ENCODE measurements at regions of chr2 and their contacts with region 1.

Region 1: GRCh38 chr2:222903234-222904220 is 42.7 kb downstream of the ACSL3 start:
- DNase-seq: peak in 1 of 2 donors; percentile 24
- ATAC-seq: peak in 7 of 8 donors; percentile 64 to 74 (median 68)
- H3K4me3 ChIP-seq: no peak overlapping the region
- H3K27ac ChIP-seq: peak overlapping the region in 1 of 10 donors; percentile 39
- H3K4me1 ChIP-seq: peaks cover 0 to 74% (median 40%) of the 10 kb centered on the region in 9 donors
- H3K27me3 ChIP-seq: no peaks in the 10 kb centered on the region
- CTCF ChIP-seq: peak; percentile 55 to 83 (median 75)

Region 2: DNA sequence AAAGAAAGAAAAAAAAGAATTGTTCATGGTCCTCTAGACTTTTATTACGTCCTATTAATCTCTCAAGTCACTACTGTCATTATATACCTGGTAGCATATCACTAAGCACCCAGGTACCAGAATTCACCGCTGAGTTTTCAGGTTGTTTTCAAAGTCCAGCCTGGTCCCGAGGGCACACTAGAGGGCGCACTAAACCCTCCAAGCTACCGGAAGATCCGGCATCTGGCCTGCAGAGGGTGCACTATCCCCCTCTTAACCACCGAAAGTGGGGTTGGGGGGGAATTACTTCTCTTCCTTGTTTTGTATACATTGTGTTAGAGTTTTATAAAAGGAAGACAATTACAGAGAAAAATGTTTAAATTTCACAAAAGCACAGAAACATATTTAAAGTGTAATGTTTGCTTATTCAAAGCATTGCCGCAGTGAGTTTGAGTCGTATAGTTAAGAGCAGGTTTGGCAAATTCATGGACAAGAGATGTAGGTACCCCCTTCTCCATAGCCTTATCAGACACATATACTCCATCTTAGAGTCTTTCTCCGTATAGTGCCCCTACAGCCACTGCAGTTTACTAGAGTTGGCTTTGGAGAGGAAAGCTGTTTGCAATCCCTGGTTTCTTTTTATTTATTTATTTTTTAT is 212.8 kb before region 1 on chr2:
- intact Hi-C with region 1: loop called in 4 of 10 experiments (anchors 5 kb)
- DNase-seq: peak; percentile 67 to 71
- ATAC-seq: peak; percentile 71 to 89 (median 84)
- H3K4me3 ChIP-seq: no peak overlapping the region
- H3K27ac ChIP-seq: no peak overlapping the region
- H3K4me1 ChIP-seq: peaks cover 0 to 13% (median 0%) of the 10 kb centered on the region in 9 donors
- H3K27me3 ChIP-seq: no peaks in the 10 kb centered on the region
- CTCF ChIP-seq: peak; percentile 80 to 99 (median 97)

Region 3: GRCh38 chr2:222714361-222715241 is 188.9 kb before region 1 on chr2:
- intact Hi-C with region 1: loop called in 5 of 10 experiments (anchors 2 to 5 kb)
- DNase-seq: peak in 1 of 2 donors; percentile 63
- ATAC-seq: peak; percentile 85 to 95 (median 90)
- H3K4me3 ChIP-seq: no peak overlapping the region
- H3K27ac ChIP-seq: peak overlapping the region; percentile 15 to 88 (median 66)
- H3K4me1 ChIP-seq: peaks cover 7 to 27% (median 18%) of the 10 kb centered on the region in 9 donors
- H3K27me3 ChIP-seq: no peaks in the 10 kb centered on the region
- CTCF ChIP-seq: no peak

Region 4: DNA sequence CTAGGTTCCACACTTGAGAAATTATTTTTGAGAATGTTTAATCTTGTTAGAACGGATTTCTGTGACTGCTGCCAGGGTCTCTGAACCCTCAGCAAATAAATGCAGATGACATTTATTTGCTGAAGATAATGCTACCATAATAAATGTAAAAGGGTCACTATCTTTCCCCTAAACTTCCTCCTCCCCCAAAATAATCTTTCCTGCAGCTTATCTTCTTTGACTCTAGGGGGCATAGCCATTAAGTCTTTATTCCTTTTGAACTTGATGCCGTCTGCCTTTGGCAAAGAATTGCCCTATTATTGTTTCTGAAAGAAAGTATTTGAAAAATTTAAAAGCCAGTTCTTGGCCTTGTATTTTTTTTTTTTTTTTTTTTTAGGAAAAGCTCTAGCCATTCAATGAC is 106.3 kb before region 1 on chr2:
- intact Hi-C with region 1: loop called in 8 of 10 experiments (anchors 2 to 10 kb)
- DNase-seq: no peak
- ATAC-seq: peak in 4 of 8 donors; percentile 22 to 51 (median 39)
- H3K4me3 ChIP-seq: no peak overlapping the region
- H3K27ac ChIP-seq: peak overlapping the region in 4 of 10 donors; percentile 37 to 60 (median 49)
- H3K4me1 ChIP-seq: peaks cover 6 to 48% (median 33%) of the 10 kb centered on the region in 9 donors
- H3K27me3 ChIP-seq: no peaks in the 10 kb centered on the region
- CTCF ChIP-seq: peak in 7 of 9 donors; percentile 40 to 63 (median 48)

Region 5: DNA sequence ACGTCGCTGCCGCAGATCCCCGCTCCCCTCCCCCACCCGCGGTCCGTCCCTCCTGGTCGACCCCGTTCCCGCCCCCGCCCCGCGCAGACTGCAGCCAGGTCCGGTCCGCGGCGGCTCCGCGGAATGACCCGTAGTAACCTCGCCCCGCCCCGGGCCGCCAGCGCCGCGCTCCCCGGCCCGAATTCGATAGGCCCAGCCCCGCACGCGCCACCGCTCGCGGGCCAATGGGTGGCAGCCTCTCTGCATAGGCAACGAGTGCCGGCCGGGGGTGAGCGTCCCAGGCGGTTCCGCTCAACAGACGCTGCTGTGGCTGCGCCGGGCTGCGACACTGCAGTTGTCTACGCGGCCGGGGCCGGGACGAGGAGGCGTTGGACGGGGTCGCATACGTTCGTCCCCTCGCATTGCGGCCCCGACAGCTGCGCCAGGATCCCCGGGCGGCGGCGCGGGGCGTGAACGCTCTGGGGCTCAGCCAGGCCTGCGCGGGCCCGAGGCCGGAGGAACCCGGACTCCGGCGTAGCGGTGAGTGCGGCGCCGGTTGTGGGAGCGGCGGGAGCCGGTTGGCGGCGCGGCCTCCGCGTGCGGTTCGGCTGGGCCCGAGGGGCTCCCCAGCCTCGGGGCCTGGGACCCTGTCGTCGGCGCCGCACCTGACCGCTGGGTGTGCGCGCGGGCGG is 42.7 kb before region 1 on chr2 and contains the start of gene ACSL3:
- intact Hi-C with region 1: loop called in 5 of 10 experiments (anchors 2 to 5 kb)
- DNase-seq: peak; percentile 97 to 98
- ATAC-seq: peak; percentile 96 to 99 (median 97)
- H3K4me3 ChIP-seq: peak within 1 kb of the TSS; percentile 76 to 100 (median 90)
- H3K27ac ChIP-seq: peak within 1 kb of the TSS; percentile 95 to 99 (median 98)
- H3K4me1 ChIP-seq: peaks cover 16 to 57% (median 54%) of the 10 kb centered on the region in 9 donors
- H3K27me3 ChIP-seq: no peaks in the 10 kb centered on the region
- CTCF ChIP-seq: peak in 4 of 9 donors; percentile 8 to 32 (median 18)
- total RNA-seq, gene ACSL3: 37.9 to 67.2 (median 54.8) TPM